Activated CD4-positive, alpha-beta T cell treated with anti-CD3 and anti-CD28 coated beads, Interleukin-2, amount 10 ng/mL, durations not matched to agents 24 days and 14 days (primary cell): ENCODE measurements at regions of chr12 and their contacts with region 1.

Region 1: DNA sequence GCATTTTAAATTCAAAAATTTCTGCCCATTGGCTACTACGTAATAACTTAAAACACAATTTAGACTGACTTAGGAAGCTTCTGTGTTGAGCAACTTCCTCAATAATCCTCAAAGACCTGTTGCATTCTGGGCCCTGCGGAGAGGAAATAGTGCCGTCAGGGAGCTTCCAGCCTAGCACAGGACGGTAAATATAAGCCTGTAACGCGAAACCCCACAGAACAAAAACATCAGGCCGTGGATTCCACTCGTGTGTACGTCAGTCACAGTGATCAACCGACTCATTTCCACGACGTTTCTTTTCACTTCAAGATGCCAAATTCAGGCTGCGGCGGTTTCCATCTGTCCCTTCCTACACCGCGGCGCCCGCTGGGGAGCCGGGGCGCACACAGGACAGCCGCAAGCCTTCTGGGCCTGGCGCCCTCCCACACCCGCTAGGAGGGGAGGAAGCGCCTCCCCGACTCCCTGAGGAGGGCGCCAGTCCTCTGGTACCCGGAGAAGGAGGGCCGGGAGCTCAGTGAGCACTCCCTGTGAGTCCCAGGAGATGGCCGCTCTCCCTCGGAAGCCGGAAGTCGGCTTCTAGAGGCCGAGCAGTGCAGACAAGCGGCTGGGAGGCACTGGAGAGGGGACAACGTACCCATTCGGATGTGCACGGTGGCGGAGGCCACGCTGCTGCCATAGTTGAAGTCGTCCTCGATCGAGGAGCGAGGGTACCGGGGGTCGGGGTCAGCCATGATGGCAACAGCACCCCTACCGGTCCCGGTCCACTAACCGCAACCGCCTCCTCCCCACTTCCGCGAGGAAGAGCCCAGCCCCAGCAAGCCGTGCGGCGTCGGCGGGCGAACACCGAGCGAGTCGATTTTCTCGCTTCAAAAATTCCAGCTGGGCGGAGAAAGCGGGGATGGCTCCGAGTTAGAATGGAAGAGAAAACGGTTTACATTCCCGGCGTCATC is at the start of gene TMBIM4:
- DNase-seq: peak; percentile 95
- H3K4me3 Mint-ChIP-seq: peak within 1 kb of the TSS; percentile 92
- H3K27ac Mint-ChIP-seq: peak within 1 kb of the TSS; percentile 100
- H3K4me1 Mint-ChIP-seq: peaks cover 26% of the 10 kb centered on the region
- H3K27me3 Mint-ChIP-seq: no peaks in the 10 kb centered on the region
- total RNA-seq, gene TMBIM4: 58.0 and 60.9 TPM in 2 replicates

Region 2: DNA sequence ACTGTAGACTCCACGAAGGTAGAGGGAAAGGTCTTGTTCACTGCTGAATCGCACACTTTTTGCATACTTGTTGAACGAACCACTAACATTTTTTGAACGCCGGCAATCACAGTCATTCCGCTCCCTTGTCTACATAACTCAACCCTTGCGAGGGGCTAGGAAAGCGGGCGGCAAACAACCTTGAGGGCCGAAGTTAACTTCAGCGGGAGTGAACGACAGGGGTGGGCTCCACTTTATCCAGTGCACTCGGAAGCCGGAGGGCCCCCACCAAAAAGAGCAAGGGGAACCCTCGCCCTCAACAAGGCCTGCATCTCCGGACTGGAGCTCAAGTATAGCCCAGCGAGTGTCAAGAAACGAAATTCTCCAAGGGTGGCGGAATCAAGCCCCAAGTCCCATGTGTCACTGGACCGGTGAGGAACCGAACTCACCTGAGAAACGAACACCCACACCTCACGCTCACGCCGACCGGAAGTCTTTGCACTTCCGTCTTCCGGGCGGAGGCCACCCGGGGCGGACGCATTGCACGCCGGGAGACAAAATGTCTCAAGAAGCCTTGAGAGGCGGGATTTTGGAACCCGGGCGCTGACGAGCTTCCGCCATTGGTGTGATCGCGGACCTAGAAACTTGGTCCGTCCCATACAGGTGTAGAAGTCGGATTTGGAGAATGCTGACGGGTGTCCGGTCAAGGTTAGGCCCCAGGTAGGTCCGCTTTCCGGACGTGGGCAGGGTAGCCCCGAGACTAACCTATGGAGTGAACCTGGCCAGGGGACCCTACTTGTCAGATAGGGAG is 39.0 kb before region 1 on chr12 and contains the start of gene LLPH:
- intact Hi-C with region 1: loop called (anchors 1 kb)
- DNase-seq: peak; percentile 97
- H3K4me3 Mint-ChIP-seq: peak within 1 kb of the TSS; percentile 96
- H3K27ac Mint-ChIP-seq: peak within 1 kb of the TSS; percentile 97
- H3K4me1 Mint-ChIP-seq: peaks cover 32% of the 10 kb centered on the region
- H3K27me3 Mint-ChIP-seq: no peaks in the 10 kb centered on the region
- total RNA-seq, gene LLPH: 33.5 and 35.2 TPM in 2 replicates

Region 3: GRCh38 chr12:66188584-66189485 is 19.3 kb after region 1 on chr12 and contains the start of gene IRAK3:
- intact Hi-C with region 1: loop called (anchors 2 kb)
- DNase-seq: peak; percentile 84
- H3K4me3 Mint-ChIP-seq: peak within 1 kb of the TSS; percentile 67
- H3K27ac Mint-ChIP-seq: peak within 1 kb of the TSS; percentile 2
- H3K4me1 Mint-ChIP-seq: peaks cover 11% of the 10 kb centered on the region
- H3K27me3 Mint-ChIP-seq: peaks cover 45% of the 10 kb centered on the region
- total RNA-seq, gene IRAK3: 1.3 and 1.8 TPM in 2 replicates

Region 4: GRCh38 chr12:66196806-66197205 is 27.3 kb after region 1 on chr12:
- intact Hi-C with region 1: loop called (anchors 2 kb)
- DNase-seq: no peak
- H3K4me3 Mint-ChIP-seq: peak overlapping the region; percentile 68
- H3K27ac Mint-ChIP-seq: peak overlapping the region; percentile 30
- H3K4me1 Mint-ChIP-seq: peaks cover 9% of the 10 kb centered on the region
- H3K27me3 Mint-ChIP-seq: peaks cover 12% of the 10 kb centered on the region

Region 5: DNA sequence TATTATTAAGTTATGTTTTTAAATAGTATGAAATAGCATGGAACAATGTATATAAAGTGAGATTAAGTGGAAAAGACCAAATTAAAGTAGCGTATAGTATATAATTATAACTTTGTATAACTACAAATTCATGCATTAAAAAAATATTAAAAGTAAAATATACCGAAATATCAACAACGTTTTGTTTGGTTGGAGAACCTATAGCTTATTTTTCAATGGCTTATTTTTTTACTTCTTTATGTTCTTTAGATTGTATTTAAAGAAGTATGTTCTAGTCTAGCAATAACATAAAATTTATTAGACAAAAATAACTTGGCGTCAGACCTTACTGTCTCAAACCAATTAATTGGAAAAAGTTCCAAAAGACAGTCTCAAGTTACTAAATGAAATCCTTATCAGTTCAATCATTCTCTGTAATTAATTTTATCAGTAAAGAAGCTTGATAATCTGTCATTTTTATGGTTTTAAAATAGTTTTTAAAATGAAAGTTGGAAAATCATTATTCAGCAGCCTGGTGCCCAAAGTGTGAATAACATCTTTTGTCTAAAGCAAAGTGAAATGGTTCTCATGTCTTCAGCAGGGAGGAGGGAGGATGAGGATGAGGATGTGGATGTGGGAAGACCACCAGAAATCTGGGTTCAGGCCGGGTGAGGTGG is 66.3 kb after region 1 on chr12:
- intact Hi-C with region 1: loop called (anchors 5 kb)
- DNase-seq: no peak
- H3K4me3 Mint-ChIP-seq: peak overlapping the region; percentile 59
- H3K27ac Mint-ChIP-seq: no peak overlapping the region
- H3K4me1 Mint-ChIP-seq: peaks cover 6% of the 10 kb centered on the region
- H3K27me3 Mint-ChIP-seq: peaks cover 36% of the 10 kb centered on the region

Region 6: GRCh38 chr12:66301944-66302826 is 132.7 kb after region 1 on chr12 and contains the start of gene HELB:
- intact Hi-C with region 1: loop called (anchors 1 kb)
- DNase-seq: peak; percentile 98
- H3K4me3 Mint-ChIP-seq: peak within 1 kb of the TSS; percentile 99
- H3K27ac Mint-ChIP-seq: peak within 1 kb of the TSS; percentile 100
- H3K4me1 Mint-ChIP-seq: peaks cover 45% of the 10 kb centered on the region
- H3K27me3 Mint-ChIP-seq: no peaks in the 10 kb centered on the region
- total RNA-seq, gene HELB: 20.2 and 21.4 TPM in 2 replicates